Sciatic nerve (tissue), 2 donors: ENCODE measurements at regions of chr11 and their contacts with region 1.

Region 1: DNA sequence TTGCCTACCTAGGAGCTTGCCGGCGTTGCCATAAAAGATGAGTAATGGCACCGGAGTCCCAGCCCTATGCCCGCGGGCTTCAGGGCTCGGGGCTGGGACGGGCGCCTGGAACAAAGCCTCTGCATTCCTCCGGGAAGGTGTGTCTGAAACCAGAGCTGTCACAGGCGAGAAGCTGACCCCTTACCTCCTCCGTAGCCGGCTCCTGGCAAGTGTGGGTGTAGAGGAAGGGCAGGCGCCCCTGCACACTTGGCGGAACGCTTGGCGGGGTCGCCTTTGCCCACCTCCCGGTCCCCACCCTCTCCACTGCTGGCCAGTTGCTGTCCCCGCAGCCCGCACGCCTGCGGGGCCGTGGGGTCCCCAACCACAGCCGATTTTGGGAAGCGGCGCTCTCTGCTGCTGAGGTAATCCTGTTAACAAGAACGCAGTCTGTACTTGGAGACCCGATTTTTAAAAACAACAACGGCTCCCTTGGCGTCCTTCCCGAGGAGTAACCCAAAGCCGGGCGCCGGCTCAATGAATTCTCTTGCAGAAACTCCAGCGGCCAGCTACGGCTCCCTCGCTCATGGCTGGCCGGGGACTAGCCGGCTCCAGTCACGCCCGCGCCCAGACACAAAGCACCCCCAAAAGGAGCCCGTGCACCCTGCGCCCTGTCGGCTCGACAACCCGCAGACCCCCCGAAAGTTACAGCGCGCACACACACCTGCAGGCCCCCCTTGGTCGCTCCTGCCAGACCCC is 89.2 kb downstream of the PLEKHA7 start:
- DNase-seq: peak; percentile 71
- ATAC-seq: peak; percentile 66

Region 2: DNA sequence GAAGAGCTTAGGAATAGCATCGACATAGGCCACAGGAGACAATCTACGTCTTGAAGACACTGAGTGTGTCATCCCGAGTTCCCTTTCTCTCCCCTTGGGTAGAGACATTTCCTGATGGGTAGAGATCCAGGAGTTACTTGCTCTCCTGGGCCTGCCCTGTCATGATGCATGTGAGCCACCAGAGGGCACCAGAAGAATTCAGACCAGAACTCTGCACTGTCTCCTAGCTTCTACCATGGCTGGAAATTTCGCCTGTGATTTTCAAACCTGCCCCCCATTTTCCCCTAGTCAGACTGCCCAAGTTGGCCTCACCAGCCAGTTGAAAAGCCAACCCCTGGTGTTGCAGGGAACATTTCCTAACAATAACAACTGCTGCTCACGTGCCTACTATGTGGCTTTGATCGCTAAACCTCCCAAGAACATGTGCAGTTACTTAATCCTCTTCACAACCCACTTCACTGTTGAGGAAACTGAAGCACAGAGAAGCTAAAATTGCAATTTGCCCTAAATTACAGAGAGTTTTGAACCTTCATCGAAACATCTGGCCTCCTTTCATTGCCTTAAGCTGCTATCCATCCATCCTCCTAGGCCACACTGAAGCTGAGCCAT is 139.4 kb before region 1 on chr11:
- intact Hi-C with region 1: loop called (anchors 10 kb)
- DNase-seq: peak; percentile 82
- ATAC-seq: peak; percentile 69